Heart left ventricle (tissue), 16 donors: ENCODE measurements at regions of chr2 and their contacts with region 1.

Region 1: GRCh38 chr2:50084086-50084843 is 930.0 kb upstream of the FSHR start:
- DNase-seq: peak in 1 of 5 donors; percentile 53
- ATAC-seq: no peak
- H3K4me3 ChIP-seq: no peak overlapping the region
- H3K27ac ChIP-seq: no peak overlapping the region
- H3K4me1 ChIP-seq: no peaks in the 10 kb centered on the region
- H3K27me3 ChIP-seq: no peaks in the 10 kb centered on the region
- CTCF ChIP-seq: no peak
- POLR2A ChIP-seq: no peak

Region 2: DNA sequence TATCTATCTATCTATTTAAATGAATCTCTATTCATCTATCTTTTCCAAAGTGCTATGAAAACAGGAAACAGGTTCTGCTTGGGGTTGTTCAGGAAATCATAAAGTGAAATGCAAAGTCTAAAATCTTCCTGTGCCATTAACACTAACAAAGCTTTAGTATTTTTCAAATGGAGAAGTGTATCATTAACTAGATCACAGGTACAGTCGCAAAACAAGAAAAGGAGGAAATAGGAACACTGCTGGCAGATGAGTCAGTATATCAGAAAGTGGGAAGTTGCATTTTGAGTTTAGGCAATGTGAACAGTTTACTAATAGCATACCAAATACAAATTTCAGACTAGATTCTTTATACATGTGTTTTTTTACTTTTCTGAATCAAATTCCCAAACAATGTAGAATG is 41.5 kb before region 1 on chr2:
- intact Hi-C with region 1: no loop called
- DNase-seq: no peak
- ATAC-seq: no peak
- H3K4me3 ChIP-seq: no peak overlapping the region
- H3K27ac ChIP-seq: no peak overlapping the region
- H3K4me1 ChIP-seq: no peaks in the 10 kb centered on the region
- H3K27me3 ChIP-seq: no peaks in the 10 kb centered on the region
- CTCF ChIP-seq: no peak
- POLR2A ChIP-seq: no peak

Region 3: GRCh38 chr2:50125246-50125645 is 41.0 kb after region 1 on chr2:
- intact Hi-C with region 1: loop called in 1 of 10 experiments (anchors 2 kb)
- DNase-seq: no peak
- ATAC-seq: no peak
- H3K4me3 ChIP-seq: no peak overlapping the region
- H3K27ac ChIP-seq: no peak overlapping the region
- H3K4me1 ChIP-seq: no peaks in the 10 kb centered on the region
- H3K27me3 ChIP-seq: no peaks in the 10 kb centered on the region
- CTCF ChIP-seq: no peak
- POLR2A ChIP-seq: no peak